Ovary (tissue), 10 donors: ENCODE measurements at regions of chr3 and their contacts with region 1.

Region 1: DNA sequence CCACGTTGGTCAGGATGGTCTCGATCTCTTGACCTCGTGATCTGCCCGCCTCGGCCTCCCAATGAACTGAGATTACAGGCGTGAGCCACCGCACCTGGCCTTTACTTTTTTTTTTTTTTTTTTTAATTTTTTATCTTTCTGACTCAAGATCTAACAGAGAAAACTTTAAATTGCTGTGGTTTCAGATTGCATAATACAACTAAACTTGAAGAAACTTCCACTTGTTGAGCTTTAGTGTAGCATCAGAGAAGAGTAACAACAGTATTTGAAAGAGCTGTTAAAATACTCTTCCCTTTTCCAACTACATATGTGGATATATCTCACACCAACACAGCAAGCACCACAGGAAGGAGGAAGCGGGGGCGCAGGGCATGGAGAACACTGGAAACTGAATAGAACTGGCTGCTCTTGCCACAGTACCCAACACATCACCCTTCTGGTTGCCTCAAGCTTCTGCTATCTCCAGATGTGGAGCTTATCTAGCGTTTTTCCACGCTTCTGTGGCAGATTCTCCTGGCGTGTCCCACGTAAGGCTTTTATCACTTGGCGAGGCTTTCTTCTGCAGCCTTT is 45.4 kb downstream of the MAP6D1 start:
- DNase-seq: no peak
- H3K4me3 ChIP-seq: no peak overlapping the region
- H3K27ac ChIP-seq: no peak overlapping the region
- H3K4me1 ChIP-seq: no peaks in the 10 kb centered on the region
- H3K27me3 ChIP-seq: no peaks in the 10 kb centered on the region
- CTCF ChIP-seq: no peak
- EP300 ChIP-seq: no peak
- POLR2A ChIP-seq: no peak

Region 2: GRCh38 chr3:183033746-183034145 is 746.2 kb before region 1 on chr3:
- intact Hi-C with region 1: loop called in 1 of 4 experiments (anchors 5 kb)
- DNase-seq: no peak
- H3K4me3 ChIP-seq: no peak overlapping the region
- H3K27ac ChIP-seq: no peak overlapping the region
- H3K4me1 ChIP-seq: peaks cover 2% of the 10 kb centered on the region
- H3K27me3 ChIP-seq: no peaks in the 10 kb centered on the region
- CTCF ChIP-seq: no peak
- EP300 ChIP-seq: no peak
- POLR2A ChIP-seq: no peak